Natural killer cell (primary cell): ENCODE measurements at regions of chr9 and their contacts with region 1.

Region 1: DNA sequence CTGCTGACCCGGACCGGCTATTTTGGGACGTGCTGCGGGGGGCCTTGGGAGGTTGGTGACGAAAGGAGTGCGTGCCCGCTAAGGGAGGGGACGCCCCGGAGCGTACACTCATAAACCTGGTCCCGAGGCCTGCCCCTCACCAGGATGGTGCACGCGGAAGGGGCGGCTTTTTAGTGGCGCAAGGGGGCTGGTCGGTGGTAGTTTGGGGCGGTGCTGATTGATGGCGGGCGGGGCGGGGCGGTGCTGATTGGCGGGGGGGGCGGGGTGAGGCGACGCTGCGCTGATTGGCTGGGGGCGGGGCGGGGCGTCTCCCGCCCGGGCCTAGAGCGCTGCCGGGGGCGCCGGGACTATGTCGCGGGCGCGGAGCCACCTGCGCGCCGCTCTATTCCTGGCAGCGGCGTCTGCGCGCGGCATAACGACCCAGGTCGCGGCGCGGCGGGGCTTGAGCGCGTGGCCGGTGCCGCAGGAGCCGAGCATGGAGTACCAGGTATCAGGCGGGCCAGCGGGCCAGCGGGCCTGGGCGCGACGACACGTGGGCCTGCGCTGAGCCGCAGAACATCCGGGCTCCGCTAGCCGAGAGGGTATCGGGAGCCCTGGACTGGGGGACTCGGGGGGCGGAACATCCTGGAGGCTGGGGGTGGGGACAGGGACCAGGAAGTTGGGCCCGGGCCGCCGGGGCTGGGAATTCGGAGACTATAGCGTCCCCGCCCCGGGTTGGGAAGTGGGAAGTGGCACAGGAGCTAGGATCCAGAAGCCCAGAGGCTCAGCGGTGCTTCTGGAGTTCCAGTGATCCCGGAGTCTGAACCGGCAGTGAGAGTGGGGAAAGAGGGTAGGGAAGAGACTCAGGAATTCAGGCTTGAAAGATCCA is at the start of gene FPGS:
- DNase-seq: peak; percentile 78 to 92
- ATAC-seq: peak; percentile 81 to 95 (median 86)
- H3K4me3 ChIP-seq: peak within 1 kb of the TSS; percentile 97
- H3K4me3 Mint-ChIP-seq: peak within 1 kb of the TSS; percentile 91
- H3K27ac ChIP-seq: peak within 1 kb of the TSS; percentile 90
- H3K27ac Mint-ChIP-seq: peak within 1 kb of the TSS; percentile 84 to 94
- H3K4me1 ChIP-seq: peaks cover 29% of the 10 kb centered on the region
- H3K4me1 Mint-ChIP-seq: peaks cover 18 to 30% of the 10 kb centered on the region in 2 donors
- H3K27me3 ChIP-seq: no peaks in the 10 kb centered on the region
- H3K27me3 Mint-ChIP-seq: no peaks in the 10 kb centered on the region
- CTCF ChIP-seq: no peak
- total RNA-seq, gene FPGS: 99.1 to 108 (median 107) TPM

Region 2: DNA sequence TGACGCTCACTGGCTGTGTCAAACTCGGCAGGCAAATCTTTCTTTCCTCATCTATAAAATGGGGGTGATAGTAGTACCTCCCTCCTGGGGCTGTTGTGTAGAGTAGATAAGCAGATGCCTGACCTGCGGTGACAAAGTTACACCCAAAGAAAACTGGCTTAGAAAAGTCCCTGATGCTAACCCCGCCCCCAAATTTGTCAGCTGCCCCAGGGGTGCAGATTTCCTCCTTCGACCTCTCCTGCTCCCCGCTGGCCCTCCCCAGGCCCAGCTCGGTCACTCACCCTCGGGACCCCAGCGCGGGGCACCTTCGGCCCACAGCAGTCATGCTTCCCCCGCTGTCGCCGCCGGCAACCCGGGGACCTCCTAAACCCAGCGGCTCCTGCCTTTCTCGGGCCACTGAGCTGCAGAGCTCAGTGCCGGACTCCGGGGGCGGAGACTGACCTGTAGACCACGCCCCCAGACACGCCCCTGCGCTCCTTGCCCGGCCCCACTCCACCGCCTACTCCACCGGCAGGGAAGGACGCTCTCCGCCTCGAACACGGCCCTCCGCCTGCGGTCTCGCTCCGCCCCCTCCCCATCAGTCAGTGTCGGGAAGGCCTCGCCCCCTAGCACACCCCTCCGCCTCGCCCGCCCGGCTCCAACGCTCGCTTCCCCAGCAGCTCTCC is 31.8 kb before region 1 on chr9:
- intact Hi-C with region 1: loop called (anchors 2 kb)
- DNase-seq: peak; percentile 93 to 96
- ATAC-seq: peak; percentile 80 to 93 (median 83)
- H3K4me3 ChIP-seq: peak overlapping the region; percentile 53
- H3K4me3 Mint-ChIP-seq: peak overlapping the region; percentile 87
- H3K27ac ChIP-seq: peak overlapping the region; percentile 90
- H3K27ac Mint-ChIP-seq: peak overlapping the region; percentile 95 to 99
- H3K4me1 ChIP-seq: peaks cover 82% of the 10 kb centered on the region
- H3K4me1 Mint-ChIP-seq: peaks cover 54 to 63% of the 10 kb centered on the region in 2 donors
- H3K27me3 ChIP-seq: no peaks in the 10 kb centered on the region
- H3K27me3 Mint-ChIP-seq: no peaks in the 10 kb centered on the region
- CTCF ChIP-seq: no peak

Region 3: GRCh38 chr9:127785023-127785932 is 17.5 kb before region 1 on chr9:
- intact Hi-C with region 1: loop called (anchors 2 kb)
- DNase-seq: peak; percentile 91 to 94
- ATAC-seq: peak; percentile 44 to 67 (median 56)
- H3K4me3 ChIP-seq: peak overlapping the region; percentile 46
- H3K4me3 Mint-ChIP-seq: peak overlapping the region; percentile 93
- H3K27ac ChIP-seq: peak overlapping the region; percentile 88
- H3K27ac Mint-ChIP-seq: peak overlapping the region; percentile 95 to 98
- H3K4me1 ChIP-seq: peaks cover 68% of the 10 kb centered on the region
- H3K4me1 Mint-ChIP-seq: peaks cover 50 to 74% of the 10 kb centered on the region in 2 donors
- H3K27me3 ChIP-seq: no peaks in the 10 kb centered on the region
- H3K27me3 Mint-ChIP-seq: no peaks in the 10 kb centered on the region
- CTCF ChIP-seq: peak; percentile 80

Region 4: GRCh38 chr9:127869310-127870152 is 66.7 kb after region 1 on chr9:
- intact Hi-C with region 1: loop called (anchors 5 kb)
- DNase-seq: peak; percentile 81 to 85
- ATAC-seq: peak; percentile 85 to 90 (median 88)
- H3K4me3 ChIP-seq: no peak overlapping the region
- H3K4me3 Mint-ChIP-seq: no peak overlapping the region
- H3K27ac ChIP-seq: no peak overlapping the region
- H3K27ac Mint-ChIP-seq: peak overlapping the region; percentile 56
- H3K4me1 ChIP-seq: peaks cover 24% of the 10 kb centered on the region
- H3K4me1 Mint-ChIP-seq: peaks cover 6 to 14% of the 10 kb centered on the region in 2 donors
- H3K27me3 ChIP-seq: no peaks in the 10 kb centered on the region
- H3K27me3 Mint-ChIP-seq: no peaks in the 10 kb centered on the region
- CTCF ChIP-seq: peak; percentile 95